Endothelial cell of umbilical vein (primary cell): ENCODE measurements at regions of chr20 and their contacts with region 1.

Region 1: GRCh38 chr20:8019246-8019997 is at the start of gene TMX4:
- DNase-seq: peak; percentile 97
- H3K4me3 ChIP-seq: peak within 1 kb of the TSS; percentile 76 to 88 (median 82)
- H3K27ac ChIP-seq: peak within 1 kb of the TSS; percentile 64
- H3K4me1 ChIP-seq: peaks cover 8% of the 10 kb centered on the region
- H3K27me3 ChIP-seq: no peaks in the 10 kb centered on the region
- CTCF ChIP-seq: peak; percentile 13 to 74
- POLR2A ChIP-seq: peak; percentile 95
- total RNA-seq, gene TMX4: 26.9 and 30.3 TPM in 2 replicates

Region 2: GRCh38 chr20:7980332-7981046 is 38.9 kb before region 1 on chr20:
- CTCF ChIA-PET with region 1: interaction called, 5 read pairs
- POLR2A ChIA-PET with region 1: no interaction called
- dilution Hi-C with region 1: no loop called
- intact Hi-C with region 1: loop called (anchors 2 kb)
- DNase-seq: peak; percentile 58
- H3K4me3 ChIP-seq: no peak overlapping the region
- H3K27ac ChIP-seq: no peak overlapping the region
- H3K4me1 ChIP-seq: no peaks in the 10 kb centered on the region
- H3K27me3 ChIP-seq: no peaks in the 10 kb centered on the region
- CTCF ChIP-seq: peak; percentile 52 to 53
- POLR2A ChIP-seq: no peak

Region 3: DNA sequence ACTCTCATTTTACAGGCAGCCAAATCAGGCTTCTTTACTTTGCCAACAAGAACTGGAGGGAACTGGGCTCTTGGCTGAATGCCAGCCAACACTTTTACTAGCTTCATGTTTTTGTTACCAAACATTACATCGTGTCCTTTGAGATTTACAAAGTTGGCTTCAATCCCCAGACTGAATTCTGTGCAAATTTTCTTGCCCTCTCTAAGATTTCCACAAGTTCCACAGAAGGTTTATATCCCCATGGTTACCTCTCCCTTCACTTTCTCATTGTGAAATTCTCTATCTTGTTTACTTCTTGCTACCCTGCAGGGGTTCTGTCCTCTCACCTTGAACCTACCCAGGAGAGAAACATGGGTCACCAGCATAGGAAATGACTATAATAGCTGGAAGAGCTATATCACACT is 75.0 kb after region 1 on chr20:
- CTCF ChIA-PET with region 1: no interaction called
- POLR2A ChIA-PET with region 1: no interaction called
- dilution Hi-C with region 1: no loop called
- intact Hi-C with region 1: loop called (anchors 1 kb)
- DNase-seq: peak; percentile 87
- H3K4me3 ChIP-seq: no peak overlapping the region
- H3K27ac ChIP-seq: peak overlapping the region; percentile 94
- H3K4me1 ChIP-seq: peaks cover 25% of the 10 kb centered on the region
- H3K27me3 ChIP-seq: no peaks in the 10 kb centered on the region
- CTCF ChIP-seq: no peak
- POLR2A ChIP-seq: no peak

Region 4: GRCh38 chr20:9243986-9244385 is 1224.6 kb after region 1 on chr20:
- CTCF ChIA-PET with region 1: no interaction called
- POLR2A ChIA-PET with region 1: no interaction called
- dilution Hi-C with region 1: no loop called
- intact Hi-C with region 1: no loop called
- DNase-seq: no peak
- H3K4me3 ChIP-seq: no peak overlapping the region
- H3K27ac ChIP-seq: no peak overlapping the region
- H3K4me1 ChIP-seq: peaks cover 14% of the 10 kb centered on the region
- H3K27me3 ChIP-seq: no peaks in the 10 kb centered on the region
- CTCF ChIP-seq: no peak
- POLR2A ChIP-seq: no peak